ENCODE measurements at regions of chr16 and their contacts with region 1.

Region 1: DNA sequence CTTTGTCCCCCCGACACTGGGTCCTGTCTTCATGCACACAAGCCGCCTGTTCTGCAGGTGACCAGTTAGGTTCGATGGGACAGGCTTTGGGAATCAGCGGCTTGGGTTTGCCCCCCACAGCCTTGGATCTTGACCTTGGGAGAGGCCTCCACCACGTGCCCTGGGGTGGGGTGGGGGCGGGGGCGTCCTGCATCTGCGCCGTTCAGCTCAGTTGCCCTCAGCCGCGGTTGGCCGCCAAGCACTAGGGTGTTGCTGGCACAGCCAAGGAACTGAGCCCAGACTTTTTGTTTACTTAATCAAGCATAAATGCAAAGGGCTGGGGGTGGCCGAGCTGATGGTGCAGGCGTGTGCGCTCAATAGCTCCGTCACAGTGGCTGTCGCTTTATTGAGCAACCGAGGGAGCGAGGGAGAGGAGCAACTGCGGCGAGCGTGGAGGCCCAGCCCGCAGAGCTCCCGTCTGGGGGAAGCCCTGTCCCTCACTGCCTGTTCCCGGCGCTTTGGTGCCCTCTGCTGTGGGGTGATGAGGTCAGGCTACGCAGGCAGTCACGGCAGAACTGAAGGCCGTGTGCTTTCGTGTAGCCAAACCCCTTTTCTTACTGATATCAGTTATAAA is 33.9 kb downstream of the JPH3 start:
- DNase-seq: peak; percentile 61
- H3K4me3 ChIP-seq: no peak overlapping the region
- H3K27ac ChIP-seq: no peak overlapping the region
- H3K4me1 ChIP-seq: no peaks in the 10 kb centered on the region
- H3K27me3 ChIP-seq: peaks cover 2% of the 10 kb centered on the region in 2 experiments
- CTCF ChIP-seq: peak; percentile 56 to 71
- POLR2A ChIP-seq: no peak

Region 2: DNA sequence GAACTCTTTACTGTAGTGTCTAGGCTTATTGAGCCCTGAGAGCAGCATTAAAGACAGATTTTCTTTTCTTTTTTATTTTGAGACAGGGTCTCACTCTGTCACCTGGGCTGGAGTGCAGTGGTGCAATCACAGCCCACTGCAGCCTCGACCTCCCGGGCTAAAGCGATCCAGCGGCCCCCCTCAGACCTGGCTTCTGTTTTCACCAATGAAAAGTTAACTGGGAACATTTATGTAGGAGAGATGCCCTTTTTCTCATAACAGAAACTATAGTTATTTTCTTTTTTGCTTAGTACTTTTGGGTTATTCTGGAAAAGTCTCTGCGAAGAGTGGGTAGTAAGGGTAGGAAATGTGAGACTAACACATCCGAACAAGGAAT is 242.5 kb before region 1 on chr16:
- CTCF ChIA-PET with region 1: interaction called, 7 read pairs
- POLR2A ChIA-PET with region 1: no interaction called
- dilution Hi-C with region 1: no loop called
- intact Hi-C with region 1: loop called (anchors 1 kb)
- DNase-seq: no peak
- H3K4me3 ChIP-seq: peak overlapping the region in 2 of 3 experiments; percentile 82 to 91
- H3K27ac ChIP-seq: no peak overlapping the region
- H3K4me1 ChIP-seq: peaks cover 26% of the 10 kb centered on the region
- H3K27me3 ChIP-seq: no peaks in the 10 kb centered on the region
- CTCF ChIP-seq: no peak
- POLR2A ChIP-seq: no peak

Region 3: DNA sequence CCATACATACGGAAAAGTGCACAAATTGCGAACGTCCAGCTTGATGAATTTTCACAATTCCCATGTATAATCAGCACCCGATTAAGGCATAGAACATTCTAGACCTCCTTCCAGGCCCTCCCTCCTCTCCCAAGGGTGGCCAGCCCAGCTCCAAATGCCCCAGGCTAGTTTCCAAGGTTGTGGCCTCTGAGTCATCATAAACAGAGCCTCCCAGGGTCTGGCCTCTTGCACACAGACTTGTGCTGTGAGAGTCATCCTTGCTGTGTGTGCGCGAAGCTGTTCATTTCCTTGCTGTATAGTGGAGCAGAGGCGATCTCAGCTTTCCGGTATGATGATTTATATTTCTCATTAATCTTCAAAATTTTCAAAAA is 54.4 kb before region 1 on chr16:
- CTCF ChIA-PET with region 1: interaction called, 145 read pairs
- POLR2A ChIA-PET with region 1: no interaction called
- dilution Hi-C with region 1: no loop called
- intact Hi-C with region 1: no loop called
- DNase-seq: peak; percentile 86
- H3K4me3 ChIP-seq: no peak overlapping the region
- H3K27ac ChIP-seq: peak overlapping the region; percentile 73
- H3K4me1 ChIP-seq: peaks cover 27% of the 10 kb centered on the region
- H3K27me3 ChIP-seq: no peaks in the 10 kb centered on the region
- CTCF ChIP-seq: no peak
- POLR2A ChIP-seq: no peak

Region 4: GRCh38 chr16:87621976-87622713 is 14.0 kb before region 1 on chr16:
- CTCF ChIA-PET with region 1: interaction called, 25 read pairs
- POLR2A ChIA-PET with region 1: no interaction called
- dilution Hi-C with region 1: no loop called
- intact Hi-C with region 1: no loop called
- DNase-seq: no peak
- H3K4me3 ChIP-seq: no peak overlapping the region
- H3K27ac ChIP-seq: no peak overlapping the region
- H3K4me1 ChIP-seq: no peaks in the 10 kb centered on the region
- H3K27me3 ChIP-seq: peaks cover 0 to 2% of the 10 kb centered on the region in 2 experiments
- CTCF ChIP-seq: no peak
- POLR2A ChIP-seq: no peak